Mammary epithelial cell (primary cell): ENCODE measurements at regions of chr9 and their contacts with region 1.

Region 1: GRCh38 chr9:34413231-34413852 is 36.6 kb upstream of the MYORG start:
- DNase-seq: peak; percentile 40
- H3K4me3 ChIP-seq: no peak overlapping the region
- H3K27ac ChIP-seq: no peak overlapping the region
- H3K4me1 ChIP-seq: no peaks in the 10 kb centered on the region
- H3K27me3 ChIP-seq: no peaks in the 10 kb centered on the region
- CTCF ChIP-seq: no peak

Region 2: GRCh38 chr9:34428325-34428958 is 15.1 kb after region 1 on chr9:
- CTCF ChIA-PET with region 1: no interaction called
- dilution Hi-C with region 1: no loop called
- in situ Hi-C with region 1: no loop called
- intact Hi-C with region 1: loop called (anchors 2 kb)
- DNase-seq: no peak
- H3K4me3 ChIP-seq: no peak overlapping the region
- H3K27ac ChIP-seq: no peak overlapping the region
- H3K4me1 ChIP-seq: no peaks in the 10 kb centered on the region
- H3K27me3 ChIP-seq: no peaks in the 10 kb centered on the region
- CTCF ChIP-seq: no peak

Region 3: GRCh38 chr9:34578241-34579103 is 165.1 kb after region 1 on chr9:
- CTCF ChIA-PET with region 1: no interaction called
- dilution Hi-C with region 1: loop called (anchors 5 kb)
- in situ Hi-C with region 1: no loop called
- intact Hi-C with region 1: no loop called
- DNase-seq: no peak
- H3K4me3 ChIP-seq: no peak overlapping the region
- H3K27ac ChIP-seq: no peak overlapping the region
- H3K4me1 ChIP-seq: no peaks in the 10 kb centered on the region
- H3K27me3 ChIP-seq: peaks cover 15% of the 10 kb centered on the region
- CTCF ChIP-seq: no peak

Region 4: DNA sequence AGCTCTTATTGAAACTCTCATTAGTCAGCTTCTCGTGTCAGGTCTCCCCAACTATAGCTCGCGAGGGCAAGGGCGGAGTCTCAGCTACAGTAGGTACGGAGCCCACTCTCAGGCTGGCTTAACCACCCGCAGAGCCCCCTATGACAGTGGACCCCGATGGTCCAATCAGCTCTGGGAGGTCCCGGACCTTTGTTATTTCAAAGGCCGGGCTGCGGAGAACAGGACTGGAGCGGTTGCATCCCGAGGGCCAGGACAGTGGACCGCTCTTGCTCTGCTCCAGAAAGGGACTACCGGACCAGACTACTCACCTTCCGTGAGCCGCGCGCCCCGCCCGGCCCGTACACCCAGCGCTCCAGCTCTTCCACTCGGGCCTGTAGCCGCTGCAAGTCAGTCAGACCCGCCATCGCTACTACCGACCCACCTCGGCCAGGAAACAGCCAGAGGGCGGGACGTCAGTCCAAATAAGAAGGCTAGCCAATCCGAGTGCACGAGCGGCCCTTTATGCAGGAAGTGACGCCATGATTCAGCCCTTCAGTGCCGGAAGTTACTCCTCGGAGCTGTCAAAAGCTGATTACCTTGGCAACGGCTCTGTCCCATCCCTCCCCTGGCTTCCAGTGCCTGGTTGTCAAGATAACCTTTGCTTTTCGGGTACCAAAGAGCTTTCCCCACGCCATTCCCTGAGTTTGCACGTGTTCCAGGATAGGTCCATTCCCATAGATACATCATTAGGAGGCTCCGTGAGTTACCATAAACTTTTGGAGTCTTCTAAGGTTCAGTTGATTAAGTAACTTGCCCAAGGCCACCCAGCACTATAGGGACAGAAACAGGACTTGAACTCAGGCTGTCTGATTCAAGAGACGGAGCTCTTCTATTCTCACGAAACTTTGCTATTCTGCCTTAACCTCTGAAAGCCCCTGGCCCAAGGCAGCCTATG is 207.0 kb after region 1 on chr9 and contains the start of gene DCTN3:
- CTCF ChIA-PET with region 1: no interaction called
- dilution Hi-C with region 1: no loop called
- in situ Hi-C with region 1: no loop called
- intact Hi-C with region 1: no loop called
- DNase-seq: peak; percentile 86
- H3K4me3 ChIP-seq: peak within 1 kb of the TSS; percentile 71 to 79 (median 77)
- H3K27ac ChIP-seq: peak within 1 kb of the TSS; percentile 62
- H3K4me1 ChIP-seq: peaks cover 6% of the 10 kb centered on the region
- H3K27me3 ChIP-seq: no peaks in the 10 kb centered on the region
- CTCF ChIP-seq: no peak
- total RNA-seq, gene DCTN3: 53.8 to 91.3 TPM